ENCODE measurements at regions of chr9 and their contacts with region 1.

Region 1: DNA sequence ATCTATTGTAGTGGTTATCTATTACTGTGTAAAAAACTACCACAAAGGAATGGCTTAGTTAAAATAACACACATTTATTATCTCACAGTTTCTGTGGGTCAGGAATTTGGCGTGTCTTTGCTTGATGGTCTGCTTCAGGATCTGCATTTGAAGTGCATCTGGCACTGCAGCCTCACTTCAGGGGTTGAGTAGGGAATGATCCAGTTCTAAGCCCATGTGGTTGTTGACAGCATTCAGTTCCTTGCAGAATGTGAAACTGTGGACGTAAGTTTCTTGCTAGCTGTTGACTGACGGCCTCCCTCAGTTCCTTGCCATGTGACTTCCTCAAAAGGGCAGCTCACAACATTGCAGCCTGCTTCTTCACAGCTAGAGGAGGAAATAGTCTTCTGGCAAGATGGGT is 2.1 kb upstream of the OGN start:
- DNase-seq: peak; percentile 23 to 77
- H3K4me3 ChIP-seq: peak overlapping the region; percentile 18 to 64
- H3K27ac ChIP-seq: peak overlapping the region; percentile 82 to 84
- H3K4me1 ChIP-seq: peaks cover 0 to 7% of the 10 kb centered on the region in 2 donors
- H3K27me3 ChIP-seq: no peaks in the 10 kb centered on the region
- CTCF ChIP-seq: no peak

Region 2: DNA sequence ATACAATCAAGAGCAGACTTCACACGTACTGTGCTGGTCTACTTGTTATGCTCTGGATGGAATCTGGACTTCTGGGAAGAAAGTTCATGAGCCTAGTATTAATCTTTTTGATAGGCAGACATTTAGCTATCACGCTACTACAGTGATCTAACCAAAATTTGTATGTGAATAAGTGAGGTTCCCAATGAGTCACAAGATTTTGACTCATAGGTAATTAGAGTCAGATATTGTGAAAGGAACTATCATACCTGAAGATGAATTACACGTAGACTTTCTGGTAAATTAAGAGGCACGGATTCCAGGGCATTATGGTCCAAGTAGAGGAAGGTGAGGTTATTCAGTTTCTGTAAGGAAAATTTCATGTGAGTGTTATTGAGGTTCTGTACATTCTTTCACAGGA is 20.5 kb before region 1 on chr9:
- intact Hi-C with region 1: loop called (anchors 2 kb)
- DNase-seq: no peak
- H3K4me3 ChIP-seq: no peak overlapping the region
- H3K27ac ChIP-seq: peak overlapping the region; percentile 83 to 87
- H3K4me1 ChIP-seq: peaks cover 0 to 23% of the 10 kb centered on the region in 2 donors
- H3K27me3 ChIP-seq: no peaks in the 10 kb centered on the region
- CTCF ChIP-seq: no peak